Spleen (tissue), 13 donors: ENCODE measurements at regions of chr15 and their contacts with region 1.

Region 1: DNA sequence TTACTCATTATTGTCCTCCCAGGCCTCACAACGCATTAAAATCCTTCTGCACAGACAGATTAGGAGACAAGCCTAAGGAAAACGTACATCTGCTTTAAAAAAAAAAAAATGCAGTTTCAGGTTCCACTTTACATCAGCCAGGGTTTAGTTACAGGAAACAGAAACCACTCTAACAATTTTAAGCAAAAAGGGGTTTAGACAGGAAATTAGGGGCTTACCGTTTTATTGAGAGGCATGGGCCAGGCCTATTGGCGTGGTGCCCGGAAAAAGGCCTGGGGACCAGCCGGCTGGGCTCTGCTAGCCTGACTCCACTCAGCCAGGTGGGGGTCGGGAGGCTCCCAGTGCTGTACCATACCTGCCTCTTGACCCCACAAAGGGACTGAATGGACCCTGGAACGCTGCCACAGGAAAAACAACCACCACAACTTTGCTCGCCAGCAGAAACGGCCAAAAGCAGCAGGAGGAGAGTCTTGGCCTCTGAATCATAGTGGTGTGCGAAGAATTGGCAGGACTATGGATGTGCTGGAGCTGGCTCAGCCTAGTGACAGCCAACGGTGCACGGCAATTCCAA is 124.3 kb downstream of the CHSY1 start:
- DNase-seq: peak; percentile 88
- H3K4me3 ChIP-seq: peak overlapping the region in 1 of 8 donors; percentile 22
- H3K27ac ChIP-seq: peak overlapping the region; percentile 75 to 93 (median 88)
- H3K4me1 ChIP-seq: peaks cover 27 to 87% (median 67%) of the 10 kb centered on the region in 6 donors
- H3K27me3 ChIP-seq: no peaks in the 10 kb centered on the region
- CTCF ChIP-seq: no peak
- POLR2A ChIP-seq: no peak

Region 2: DNA sequence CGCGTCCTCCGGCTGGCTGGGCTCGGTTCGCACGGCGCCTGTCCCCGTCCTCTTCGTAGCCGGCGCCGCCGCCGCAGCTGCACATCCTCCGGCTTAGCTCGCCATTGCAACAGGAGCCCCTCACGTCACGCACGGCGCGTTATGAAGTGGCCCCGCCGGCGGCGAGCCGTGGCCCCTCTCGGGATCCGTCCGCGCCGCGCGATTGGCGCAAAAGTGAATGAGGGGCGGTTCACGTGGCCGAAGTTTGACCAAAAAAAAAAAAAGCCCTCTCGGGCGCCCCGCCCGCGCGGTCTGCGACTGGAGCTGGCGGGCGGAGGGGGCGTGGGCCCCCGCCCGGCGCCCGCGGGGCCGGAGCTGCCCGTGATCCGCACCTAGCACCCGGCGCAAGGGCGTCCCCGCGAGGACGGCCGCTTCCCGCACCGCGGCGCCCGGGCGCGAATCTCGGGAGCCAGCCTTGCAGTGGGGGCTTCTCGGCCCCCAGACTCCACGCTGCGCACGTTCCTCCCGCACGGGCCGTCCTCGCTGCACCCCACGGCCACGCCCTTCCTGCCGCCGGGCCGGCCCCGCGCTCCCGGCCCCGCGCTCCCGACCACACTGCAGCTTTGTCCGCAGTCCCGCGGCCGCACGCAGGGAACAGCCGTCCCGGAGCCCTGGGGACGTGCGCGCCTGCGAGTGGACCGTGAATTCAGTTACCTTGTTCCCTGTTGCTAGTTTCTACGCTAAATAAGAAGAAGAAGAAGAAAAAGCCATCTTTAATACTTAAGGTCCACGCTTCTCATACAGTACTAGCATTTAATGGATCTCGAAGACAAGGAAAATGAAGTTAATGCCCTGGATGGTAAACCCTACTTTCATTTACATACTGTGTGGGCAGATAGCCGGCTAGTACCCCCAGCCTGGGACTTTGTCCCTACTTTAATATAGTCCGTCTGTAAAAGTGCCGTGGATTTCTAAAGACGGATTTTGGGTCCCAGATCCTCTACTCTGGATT is 124.5 kb after region 1 on chr15 and contains the start of gene CHSY1:
- intact Hi-C with region 1: loop called (anchors 10 kb)
- DNase-seq: peak; percentile 98
- H3K4me3 ChIP-seq: peak within 1 kb of the TSS; percentile 76 to 93 (median 82)
- H3K27ac ChIP-seq: peak within 1 kb of the TSS; percentile 74 to 96 (median 92)
- H3K4me1 ChIP-seq: peaks cover 21 to 81% (median 62%) of the 10 kb centered on the region in 6 donors
- H3K27me3 ChIP-seq: no peaks in the 10 kb centered on the region
- CTCF ChIP-seq: peak in 5 of 11 experiments; percentile 24 to 38 (median 30)
- POLR2A ChIP-seq: peak in 2 of 3 donors; percentile 73 to 84
- total RNA-seq, gene CHSY1: 50.2 to 99.5 (median 55.9) TPM